PC-3 (cell line): ENCODE measurements at regions of chr2 and their contacts with region 1.

Region 1: DNA sequence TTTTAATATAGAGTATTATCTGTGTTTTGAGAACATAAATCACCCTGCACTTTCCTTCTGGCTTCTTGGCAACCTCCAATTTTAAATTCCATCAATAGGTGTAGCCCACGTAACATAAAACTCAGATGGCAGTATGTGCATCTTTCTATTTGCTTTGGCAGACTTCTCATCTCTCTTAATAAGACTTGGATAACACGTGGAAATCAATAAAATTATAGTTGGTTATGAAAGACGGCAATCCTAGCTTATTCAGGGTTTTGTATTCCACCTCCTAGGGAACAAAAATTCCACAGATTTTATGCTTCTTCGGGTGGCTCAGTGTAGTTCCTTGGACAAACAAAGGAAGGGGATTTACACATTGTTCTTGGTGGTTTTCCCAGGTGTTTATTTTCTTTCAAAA is 299.3 kb downstream of the RND3 start:
- DNase-seq: peak; percentile 93
- ATAC-seq: peak; percentile 91
- H3K4me3 ChIP-seq: peak overlapping the region; percentile 26; the same call in 1 of the 2 replicates
- H3K27ac ChIP-seq: peak overlapping the region; percentile 79
- H3K4me1 ChIP-seq: peaks cover 23% of the 10 kb centered on the region
- H3K27me3 ChIP-seq: no peaks in the 10 kb centered on the region
- CTCF ChIP-seq: peak; percentile 43

Region 2: DNA sequence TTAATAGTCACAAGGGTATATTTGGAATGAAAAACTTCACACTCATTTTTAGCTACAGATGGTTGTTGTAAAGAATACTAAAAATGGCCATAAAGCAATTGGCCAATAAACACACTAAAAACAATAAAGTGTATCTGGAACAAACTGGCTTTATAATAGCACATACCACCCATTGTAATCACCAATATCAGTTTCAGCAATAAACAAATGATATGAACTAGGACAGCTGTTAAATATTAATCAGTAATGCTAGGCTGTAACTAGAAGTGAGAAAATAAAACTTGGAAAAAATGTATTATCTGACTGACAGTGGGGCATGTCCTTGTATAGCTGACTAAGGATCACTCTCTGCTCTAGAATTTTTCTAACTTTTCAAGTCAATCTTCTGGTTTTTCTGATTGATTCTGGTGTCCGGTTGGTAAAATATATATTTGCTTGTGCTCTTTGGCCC is 13.2 kb before region 1 on chr2:
- CTCF ChIA-PET with region 1: no interaction called
- POLR2A ChIA-PET with region 1: no interaction called
- intact Hi-C with region 1: no loop called
- DNase-seq: no peak
- ATAC-seq: peak; percentile 16
- H3K4me3 ChIP-seq: no peak overlapping the region
- H3K27ac ChIP-seq: peak overlapping the region; percentile 66
- H3K4me1 ChIP-seq: peaks cover 27% of the 10 kb centered on the region
- H3K27me3 ChIP-seq: no peaks in the 10 kb centered on the region
- CTCF ChIP-seq: no peak

Region 3: GRCh38 chr2:150271952-150272802 is 84.0 kb after region 1 on chr2:
- CTCF ChIA-PET with region 1: no interaction called
- POLR2A ChIA-PET with region 1: no interaction called
- intact Hi-C with region 1: loop called (anchors 2 kb)
- DNase-seq: peak; percentile 93
- ATAC-seq: peak; percentile 97
- H3K4me3 ChIP-seq: peak overlapping the region; percentile 2; the same call in 1 of the 2 replicates
- H3K27ac ChIP-seq: peak overlapping the region; percentile 77
- H3K4me1 ChIP-seq: peaks cover 28% of the 10 kb centered on the region
- H3K27me3 ChIP-seq: no peaks in the 10 kb centered on the region
- CTCF ChIP-seq: no peak

Region 4: DNA sequence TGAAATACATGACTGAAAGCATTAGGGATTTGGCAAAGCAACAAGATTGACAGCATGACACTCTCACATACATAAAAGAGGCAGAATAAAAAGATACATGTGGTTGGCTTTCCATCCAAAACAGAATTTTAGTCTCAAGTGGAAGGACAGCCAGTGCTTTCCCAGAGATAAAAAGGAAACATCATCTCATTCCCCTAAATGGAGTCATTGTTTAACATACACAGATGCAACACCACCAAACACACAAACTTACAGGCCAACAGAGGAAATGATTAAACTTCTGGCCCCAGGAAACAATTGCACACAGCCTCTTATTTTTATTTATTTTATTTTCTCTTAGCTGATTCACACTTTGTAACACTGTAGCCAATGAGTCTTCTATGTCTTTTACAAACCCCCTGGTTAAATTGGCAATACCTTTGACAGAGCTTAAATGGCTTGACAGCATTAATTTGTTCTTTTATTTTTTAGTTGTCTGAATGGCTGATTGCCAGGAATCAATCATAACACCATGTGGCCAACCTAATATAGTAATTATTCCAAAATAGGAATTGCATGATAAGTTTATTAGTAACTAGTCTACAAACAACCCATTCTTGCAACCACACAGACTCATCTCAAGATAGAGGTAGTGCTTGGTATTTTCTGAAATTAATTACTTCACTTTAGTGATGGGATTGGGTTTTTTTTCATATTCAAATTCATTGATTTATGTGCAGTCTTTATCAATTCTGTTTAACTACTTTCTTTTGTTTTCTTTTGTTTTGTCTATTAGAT is 108.8 kb after region 1 on chr2:
- CTCF ChIA-PET with region 1: no interaction called
- POLR2A ChIA-PET with region 1: no interaction called
- intact Hi-C with region 1: loop called (anchors 2 kb)
- DNase-seq: peak; percentile 85
- ATAC-seq: peak; percentile 96
- H3K4me3 ChIP-seq: no peak overlapping the region
- H3K27ac ChIP-seq: peak overlapping the region; percentile 77
- H3K4me1 ChIP-seq: peaks cover 28% of the 10 kb centered on the region
- H3K27me3 ChIP-seq: no peaks in the 10 kb centered on the region
- CTCF ChIP-seq: no peak

Region 5: DNA sequence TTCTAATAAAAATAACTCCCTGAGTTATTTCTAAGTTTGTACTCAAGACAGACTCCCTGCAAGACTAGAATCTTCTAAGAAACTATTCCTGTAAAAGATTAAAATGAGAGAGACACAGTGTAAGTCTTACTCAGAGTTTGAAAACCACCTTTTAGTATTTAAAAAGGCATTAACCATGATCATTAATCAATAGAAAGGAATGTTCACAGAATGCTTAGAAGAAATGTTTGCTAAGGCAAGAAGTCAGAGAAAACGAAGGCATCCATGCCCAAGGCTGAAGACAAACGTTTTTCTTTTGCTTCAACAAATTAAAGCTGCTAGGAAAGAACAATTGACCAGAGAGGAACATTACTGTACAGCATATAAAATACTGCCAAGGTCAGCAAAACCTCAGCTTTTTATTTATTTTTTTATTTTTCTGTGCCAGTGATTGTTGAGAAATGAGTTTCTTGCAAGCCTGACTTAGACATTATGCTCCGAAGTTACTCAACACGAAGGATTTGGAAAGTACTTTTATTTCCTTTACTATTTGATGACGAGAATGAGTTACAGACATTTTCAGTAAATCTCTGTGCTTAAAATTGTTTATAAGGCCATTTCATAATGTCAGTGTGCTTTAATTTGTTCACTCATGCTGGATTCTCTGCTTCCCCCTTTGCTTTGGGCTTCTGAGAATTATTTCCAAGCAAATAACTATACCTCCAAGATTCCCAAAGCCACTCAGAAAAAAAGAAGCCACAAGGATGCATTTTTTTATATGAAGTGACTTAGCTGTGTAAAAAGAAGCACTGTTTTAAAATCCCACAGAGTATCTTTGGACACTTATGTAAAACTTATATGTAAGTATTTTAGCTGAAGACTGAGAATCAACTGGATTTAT is 278.8 kb after region 1 on chr2:
- CTCF ChIA-PET with region 1: no interaction called
- POLR2A ChIA-PET with region 1: no interaction called
- intact Hi-C with region 1: loop called (anchors 2 kb)
- DNase-seq: peak; percentile 63
- ATAC-seq: peak; percentile 7
- H3K4me3 ChIP-seq: no peak overlapping the region
- H3K27ac ChIP-seq: peak overlapping the region; percentile 16
- H3K4me1 ChIP-seq: peaks cover 56% of the 10 kb centered on the region
- H3K27me3 ChIP-seq: no peaks in the 10 kb centered on the region
- CTCF ChIP-seq: no peak

Region 6: GRCh38 chr2:150478200-150478974 is 290.2 kb after region 1 on chr2:
- CTCF ChIA-PET with region 1: no interaction called
- POLR2A ChIA-PET with region 1: interaction called, 6 read pairs
- intact Hi-C with region 1: loop called (anchors 1 kb)
- DNase-seq: peak; percentile 91
- ATAC-seq: peak; percentile 20
- H3K4me3 ChIP-seq: peak overlapping the region; percentile 58
- H3K27ac ChIP-seq: peak overlapping the region; percentile 98
- H3K4me1 ChIP-seq: peaks cover 98% of the 10 kb centered on the region
- H3K27me3 ChIP-seq: no peaks in the 10 kb centered on the region
- CTCF ChIP-seq: no peak

Region 7: GRCh38 chr2:151238527-151239487 is 1050.6 kb after region 1 on chr2:
- CTCF ChIA-PET with region 1: no interaction called
- POLR2A ChIA-PET with region 1: interaction called, 7 read pairs
- intact Hi-C with region 1: loop called (anchors 5 kb)
- DNase-seq: peak; percentile 86
- ATAC-seq: peak; percentile 52
- H3K4me3 ChIP-seq: no peak overlapping the region
- H3K27ac ChIP-seq: peak overlapping the region; percentile 7
- H3K4me1 ChIP-seq: peaks cover 27% of the 10 kb centered on the region
- H3K27me3 ChIP-seq: no peaks in the 10 kb centered on the region
- CTCF ChIP-seq: peak; percentile 91